ENCODE measurements at regions of chr12 and their contacts with region 1.

Region 1: DNA sequence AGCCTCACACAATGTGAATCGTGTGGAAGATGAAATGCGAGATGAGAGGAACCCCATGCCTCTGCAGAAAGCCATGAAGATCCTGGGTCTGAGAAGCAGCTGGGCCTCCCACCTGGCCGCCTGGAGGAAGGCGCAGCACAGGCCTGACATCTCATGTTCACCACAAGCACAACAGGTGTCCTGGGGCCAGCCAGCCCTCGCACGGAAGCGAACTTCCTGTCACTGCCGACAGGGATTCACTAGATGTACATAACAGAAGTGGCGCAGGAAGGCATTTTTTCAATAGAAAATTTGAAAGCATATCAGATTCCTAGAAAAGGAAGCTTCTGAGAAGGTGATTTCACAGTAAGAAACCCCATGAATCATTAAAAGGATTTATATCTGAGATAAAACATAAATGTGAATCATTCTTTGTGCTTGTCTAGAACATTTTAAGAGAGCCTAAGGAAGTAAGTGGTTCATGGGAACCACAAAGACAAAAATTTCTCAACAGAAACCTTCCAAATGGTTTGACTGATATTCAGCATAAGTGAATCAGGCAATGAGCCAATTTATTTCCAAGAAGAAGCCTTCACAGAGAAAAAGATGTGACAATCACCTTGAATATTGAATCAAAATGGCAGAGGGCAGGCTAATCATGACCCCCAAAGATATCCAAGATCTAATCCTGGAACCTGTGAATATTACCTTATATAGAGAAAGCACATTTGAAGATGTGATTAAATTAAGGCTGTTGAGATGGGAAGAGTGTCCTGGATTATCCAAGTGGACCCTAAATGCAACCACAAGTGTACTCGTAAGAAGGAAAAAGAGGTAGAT is 311.9 kb downstream of the DUSP6 start:
- DNase-seq: peak; percentile 92
- ATAC-seq: peak; percentile 78
- H3K4me3 Mint-ChIP-seq: peak overlapping the region; percentile 40
- H3K27ac Mint-ChIP-seq: peak overlapping the region; percentile 99
- H3K4me1 Mint-ChIP-seq: peaks cover 54% of the 10 kb centered on the region
- H3K27me3 Mint-ChIP-seq: no peaks in the 10 kb centered on the region

Region 2: GRCh38 chr12:89067421-89068187 is 27.2 kb after region 1 on chr12:
- CTCF ChIA-PET with region 1: interaction called, 5 read pairs
- POLR2A ChIA-PET with region 1: interaction called, 6 read pairs
- intact Hi-C with region 1: loop called (anchors 1 kb)
- DNase-seq: no peak
- ATAC-seq: no peak
- H3K4me3 Mint-ChIP-seq: no peak overlapping the region
- H3K27ac Mint-ChIP-seq: peak overlapping the region; percentile 69
- H3K4me1 Mint-ChIP-seq: peaks cover 68% of the 10 kb centered on the region
- H3K27me3 Mint-ChIP-seq: no peaks in the 10 kb centered on the region

Region 3: GRCh38 chr12:89135976-89136634 is 95.8 kb after region 1 on chr12:
- CTCF ChIA-PET with region 1: interaction called, 3 read pairs
- POLR2A ChIA-PET with region 1: no interaction called
- intact Hi-C with region 1: loop called in 1 of 2 experiments (anchors 5 kb)
- DNase-seq: peak; percentile 10
- ATAC-seq: peak; percentile 60
- H3K4me3 Mint-ChIP-seq: no peak overlapping the region
- H3K27ac Mint-ChIP-seq: no peak overlapping the region
- H3K4me1 Mint-ChIP-seq: peaks cover 30% of the 10 kb centered on the region
- H3K27me3 Mint-ChIP-seq: peaks cover 8% of the 10 kb centered on the region

Region 4: DNA sequence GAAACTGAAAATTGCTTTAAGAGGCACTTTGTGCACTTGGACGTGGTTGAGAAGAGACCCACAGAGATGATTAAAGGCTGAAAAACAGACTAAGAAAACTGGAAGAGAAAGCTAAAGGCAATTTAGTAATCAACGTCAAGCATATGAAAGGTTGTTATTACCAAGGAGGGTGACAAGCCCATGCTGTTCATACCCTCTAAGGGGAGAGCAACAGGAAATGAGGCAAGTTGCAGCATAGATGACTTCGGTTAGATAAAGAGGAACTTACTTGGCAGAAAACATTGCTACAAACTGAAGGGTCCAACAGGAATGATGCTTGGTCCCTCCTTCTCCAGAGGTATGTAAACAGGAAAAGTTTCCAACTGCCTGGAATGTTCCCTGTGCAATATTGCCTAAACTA is 204.2 kb after region 1 on chr12:
- CTCF ChIA-PET with region 1: interaction called, 4 read pairs
- POLR2A ChIA-PET with region 1: interaction called, 6 read pairs
- intact Hi-C with region 1: loop called in 1 of 2 experiments (anchors 1 kb)
- DNase-seq: peak; percentile 48
- ATAC-seq: peak; percentile 88
- H3K4me3 Mint-ChIP-seq: peak overlapping the region; percentile 27
- H3K27ac Mint-ChIP-seq: peak overlapping the region; percentile 84
- H3K4me1 Mint-ChIP-seq: peaks cover 38% of the 10 kb centered on the region
- H3K27me3 Mint-ChIP-seq: no peaks in the 10 kb centered on the region

Region 5: GRCh38 chr12:89494411-89495231 is 454.3 kb after region 1 on chr12:
- CTCF ChIA-PET with region 1: no interaction called
- POLR2A ChIA-PET with region 1: interaction called, 3 read pairs
- intact Hi-C with region 1: loop called (anchors 1 kb)
- DNase-seq: peak; percentile 72
- ATAC-seq: peak; percentile 90
- H3K4me3 Mint-ChIP-seq: peak overlapping the region; percentile 28
- H3K27ac Mint-ChIP-seq: peak overlapping the region; percentile 92
- H3K4me1 Mint-ChIP-seq: peaks cover 27% of the 10 kb centered on the region
- H3K27me3 Mint-ChIP-seq: no peaks in the 10 kb centered on the region

Region 6: GRCh38 chr12:89862511-89863179 is 822.3 kb after region 1 on chr12:
- CTCF ChIA-PET with region 1: no interaction called
- POLR2A ChIA-PET with region 1: no interaction called
- intact Hi-C with region 1: loop called in 1 of 2 experiments (anchors 1 kb)
- DNase-seq: peak; percentile 45
- ATAC-seq: peak; percentile 40
- H3K4me3 Mint-ChIP-seq: peak overlapping the region; percentile 70
- H3K27ac Mint-ChIP-seq: peak overlapping the region; percentile 98
- H3K4me1 Mint-ChIP-seq: peaks cover 64% of the 10 kb centered on the region
- H3K27me3 Mint-ChIP-seq: no peaks in the 10 kb centered on the region

Region 7: GRCh38 chr12:90280564-90281058 is 1240.3 kb after region 1 on chr12:
- CTCF ChIA-PET with region 1: no interaction called
- POLR2A ChIA-PET with region 1: no interaction called
- intact Hi-C with region 1: loop called in 1 of 2 experiments (anchors 1 kb)
- DNase-seq: peak; percentile 33
- ATAC-seq: peak; percentile 74
- H3K4me3 Mint-ChIP-seq: no peak overlapping the region
- H3K27ac Mint-ChIP-seq: peak overlapping the region; percentile 11
- H3K4me1 Mint-ChIP-seq: peaks cover 28% of the 10 kb centered on the region
- H3K27me3 Mint-ChIP-seq: peaks cover 16% of the 10 kb centered on the region